Activated CD8-positive, alpha-beta T cell treated with anti-CD3 and anti-CD28 coated beads, Interleukin-2, amount 10 ng/mL, durations not matched to agents 7 days and 5 days (primary cell): ENCODE measurements at regions of chr19 and their contacts with region 1.

Region 1: GRCh38 chr19:54674021-54674617 is 11.3 kb downstream of the LILRB4 start:
- DNase-seq: peak; percentile 49
- ATAC-seq: no peak
- H3K4me3 Mint-ChIP-seq: no peak overlapping the region
- H3K27ac Mint-ChIP-seq: no peak overlapping the region
- H3K4me1 Mint-ChIP-seq: peaks cover 8% of the 10 kb centered on the region
- H3K27me3 Mint-ChIP-seq: peaks cover 10% of the 10 kb centered on the region

Region 2: DNA sequence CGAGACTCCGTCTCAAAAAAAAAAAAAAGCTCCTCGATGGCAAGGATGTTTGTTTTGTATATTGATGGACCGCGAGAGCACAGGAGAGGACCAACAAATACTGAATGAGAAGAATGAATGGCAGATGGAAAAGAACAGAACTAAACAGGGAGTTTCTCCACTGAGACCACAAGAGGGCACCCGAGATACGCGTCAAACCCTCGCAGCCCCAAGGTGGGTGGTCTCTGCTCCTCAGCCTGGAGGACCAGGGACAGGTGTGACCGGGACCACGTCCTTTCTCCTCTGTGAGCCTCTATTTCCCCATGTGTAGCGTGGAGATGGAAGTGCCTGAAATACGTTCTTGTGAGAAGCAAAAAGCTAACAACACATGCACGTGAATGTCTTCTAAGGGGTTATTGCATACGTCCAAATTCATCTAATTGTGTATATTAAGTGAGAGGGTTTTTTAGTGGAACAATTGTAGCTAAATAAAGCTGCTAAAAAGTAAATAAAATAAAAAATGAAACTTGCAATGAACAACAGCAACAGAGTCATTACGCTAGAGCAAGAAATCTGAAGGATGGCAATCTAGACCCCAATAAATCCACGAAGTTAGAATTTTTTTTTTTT is 192.7 kb before region 1 on chr19:
- CTCF ChIA-PET with region 1: interaction called, 48 read pairs
- POLR2A ChIA-PET with region 1: no interaction called
- DNase-seq: peak; percentile 60
- ATAC-seq: peak; percentile 64
- H3K4me3 Mint-ChIP-seq: no peak overlapping the region
- H3K27ac Mint-ChIP-seq: no peak overlapping the region
- H3K4me1 Mint-ChIP-seq: peaks cover 32% of the 10 kb centered on the region
- H3K27me3 Mint-ChIP-seq: peaks cover 30% of the 10 kb centered on the region

Region 3: DNA sequence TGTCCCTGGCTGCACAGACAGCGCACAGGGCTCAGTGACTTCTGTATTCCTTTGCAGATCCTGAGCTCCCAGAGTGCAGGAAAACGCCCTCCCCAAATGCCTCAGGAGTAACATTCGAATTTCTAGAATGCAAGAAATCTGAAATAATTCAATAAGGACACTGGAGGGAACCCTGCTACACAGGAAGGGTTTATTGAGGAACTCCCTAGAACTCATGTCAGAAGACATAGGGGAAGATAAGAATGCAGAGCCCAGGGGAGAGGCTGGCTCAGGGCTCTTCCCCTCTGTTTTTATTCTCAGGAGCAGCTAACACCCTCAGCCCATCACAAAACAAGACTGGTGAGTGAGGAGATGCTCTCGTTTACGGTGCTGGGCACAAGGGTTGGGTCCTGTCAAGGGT is 73.9 kb before region 1 on chr19:
- CTCF ChIA-PET with region 1: no interaction called
- POLR2A ChIA-PET with region 1: no interaction called
- DNase-seq: no peak
- ATAC-seq: no peak
- H3K4me3 Mint-ChIP-seq: no peak overlapping the region
- H3K27ac Mint-ChIP-seq: no peak overlapping the region
- H3K4me1 Mint-ChIP-seq: no peaks in the 10 kb centered on the region
- H3K27me3 Mint-ChIP-seq: peaks cover 20% of the 10 kb centered on the region

Region 4: DNA sequence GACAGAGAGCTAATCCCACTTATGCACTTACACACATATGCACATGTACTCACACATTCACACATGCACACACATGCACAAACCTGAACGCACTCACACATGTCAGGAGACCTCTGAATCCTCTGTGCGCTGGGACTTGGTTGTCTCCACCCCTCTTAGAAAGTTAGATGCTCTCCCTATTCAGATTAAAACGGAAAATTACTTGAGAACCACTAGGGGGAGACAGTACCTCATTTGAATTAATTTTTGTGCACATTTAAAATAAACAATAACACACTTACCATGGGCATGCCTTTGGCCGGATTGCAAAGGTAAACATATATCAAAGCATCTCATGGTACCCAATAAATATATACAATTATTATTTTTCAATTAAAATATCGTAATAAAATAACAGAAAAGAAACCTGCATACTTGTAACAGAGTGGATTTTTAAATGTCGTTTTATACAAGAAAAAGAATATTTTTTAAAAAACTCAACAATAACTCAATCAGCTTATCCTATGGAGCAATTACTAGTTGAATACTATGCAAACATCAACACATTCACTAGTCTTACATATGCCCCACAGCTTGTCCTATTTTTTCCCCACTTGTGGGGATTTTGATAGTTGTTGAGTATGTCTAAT is 20.8 kb before region 1 on chr19:
- CTCF ChIA-PET with region 1: interaction called, 10 read pairs
- POLR2A ChIA-PET with region 1: no interaction called
- DNase-seq: no peak
- ATAC-seq: no peak
- H3K4me3 Mint-ChIP-seq: no peak overlapping the region
- H3K27ac Mint-ChIP-seq: no peak overlapping the region
- H3K4me1 Mint-ChIP-seq: no peaks in the 10 kb centered on the region
- H3K27me3 Mint-ChIP-seq: peaks cover 8% of the 10 kb centered on the region

Region 5: DNA sequence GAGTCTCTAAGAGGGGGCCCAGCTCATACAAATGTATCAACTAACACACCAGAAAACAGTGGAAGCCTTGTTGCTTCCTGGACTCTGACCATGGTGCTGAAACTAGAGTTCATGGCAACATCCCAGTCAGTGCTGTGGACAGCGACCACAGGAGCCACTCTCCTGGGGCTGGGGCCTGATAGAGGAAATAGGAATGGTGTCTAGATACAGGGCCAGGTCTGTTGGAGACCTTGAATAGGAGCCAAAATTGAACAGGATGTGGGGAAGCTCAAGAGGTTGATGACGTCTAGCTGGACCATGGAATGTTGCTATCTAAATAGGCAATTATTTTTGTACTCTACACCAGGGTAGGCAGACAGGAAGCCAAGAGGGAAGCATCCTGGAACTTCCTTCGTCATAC is 10.4 kb after region 1 on chr19:
- CTCF ChIA-PET with region 1: interaction called, 23 read pairs
- POLR2A ChIA-PET with region 1: no interaction called
- DNase-seq: peak; percentile 57
- ATAC-seq: no peak
- H3K4me3 Mint-ChIP-seq: no peak overlapping the region
- H3K27ac Mint-ChIP-seq: no peak overlapping the region
- H3K4me1 Mint-ChIP-seq: no peaks in the 10 kb centered on the region
- H3K27me3 Mint-ChIP-seq: peaks cover 9% of the 10 kb centered on the region

Region 6: DNA sequence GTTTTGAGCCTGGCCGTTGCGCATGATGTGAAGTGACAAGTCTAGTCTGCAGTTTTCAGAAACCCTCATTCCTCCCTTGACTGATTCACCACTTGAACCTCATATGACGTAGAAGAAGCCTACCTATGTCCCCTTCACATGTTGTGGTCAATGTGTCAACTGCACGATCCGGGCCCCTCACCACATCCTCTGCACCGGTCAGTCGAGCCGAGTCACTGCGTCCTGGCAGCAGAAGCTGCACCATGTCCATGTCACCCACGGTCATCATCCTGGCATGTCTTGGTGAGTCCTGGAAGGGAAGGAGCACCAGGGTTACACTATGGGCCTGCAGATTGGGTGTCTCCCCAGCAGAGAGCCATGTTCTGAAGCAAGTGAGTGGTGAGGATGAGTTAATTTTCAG is 129.3 kb after region 1 on chr19 and contains the start of gene KIR2DL4:
- CTCF ChIA-PET with region 1: no interaction called
- POLR2A ChIA-PET with region 1: no interaction called
- DNase-seq: no peak
- ATAC-seq: no peak
- H3K4me3 Mint-ChIP-seq: no peak within 1 kb of the TSS
- H3K27ac Mint-ChIP-seq: no peak within 1 kb of the TSS
- H3K4me1 Mint-ChIP-seq: no peaks in the 10 kb centered on the region
- H3K27me3 Mint-ChIP-seq: peaks cover 31% of the 10 kb centered on the region
- total RNA-seq, gene KIR2DL4: not detected